CD4-positive, alpha-beta T cell (primary cell): ENCODE measurements at regions of chr18 and their contacts with region 1.

Region 1: GRCh38 chr18:46148810-46149209 is 44.6 kb downstream of the HAUS1 start:
- DNase-seq: peak in 12 of 14 experiments; percentile 9 to 74 (median 40)
- ATAC-seq: peak; percentile 64
- H3K4me3 ChIP-seq: no peak overlapping the region
- H3K4me3 Mint-ChIP-seq: no peak overlapping the region
- H3K27ac ChIP-seq: no peak overlapping the region
- H3K27ac Mint-ChIP-seq: peak overlapping the region; percentile 5
- H3K4me1 ChIP-seq: peaks cover 42% of the 10 kb centered on the region
- H3K4me1 Mint-ChIP-seq: peaks cover 29% of the 10 kb centered on the region
- H3K27me3 ChIP-seq: no peaks in the 10 kb centered on the region
- H3K27me3 Mint-ChIP-seq: no peaks in the 10 kb centered on the region
- CTCF ChIP-seq: peak; percentile 77

Region 2: GRCh38 chr18:45566025-45566740 is 582.6 kb before region 1 on chr18:
- CTCF ChIA-PET with region 1: no interaction called
- POLR2A ChIA-PET with region 1: no interaction called
- intact Hi-C with region 1: no loop called
- DNase-seq: no peak
- ATAC-seq: no peak
- H3K4me3 ChIP-seq: no peak overlapping the region
- H3K4me3 Mint-ChIP-seq: no peak overlapping the region
- H3K27ac ChIP-seq: no peak overlapping the region
- H3K27ac Mint-ChIP-seq: no peak overlapping the region
- H3K4me1 ChIP-seq: no peaks in the 10 kb centered on the region
- H3K4me1 Mint-ChIP-seq: no peaks in the 10 kb centered on the region
- H3K27me3 ChIP-seq: peaks cover 0 to 3% of the 10 kb centered on the region in 2 experiments
- H3K27me3 Mint-ChIP-seq: peaks cover 5% of the 10 kb centered on the region
- CTCF ChIP-seq: no peak

Region 3: GRCh38 chr18:45993389-45993788 is 155.4 kb before region 1 on chr18:
- CTCF ChIA-PET with region 1: no interaction called
- POLR2A ChIA-PET with region 1: no interaction called
- intact Hi-C with region 1: no loop called
- DNase-seq: no peak
- ATAC-seq: no peak
- H3K4me3 ChIP-seq: no peak overlapping the region
- H3K4me3 Mint-ChIP-seq: no peak overlapping the region
- H3K27ac ChIP-seq: no peak overlapping the region
- H3K27ac Mint-ChIP-seq: no peak overlapping the region
- H3K4me1 ChIP-seq: peaks cover 20% of the 10 kb centered on the region
- H3K4me1 Mint-ChIP-seq: peaks cover 20% of the 10 kb centered on the region
- H3K27me3 ChIP-seq: no peaks in the 10 kb centered on the region
- H3K27me3 Mint-ChIP-seq: no peaks in the 10 kb centered on the region
- CTCF ChIP-seq: no peak

Region 4: GRCh38 chr18:46213295-46213694 is 64.5 kb after region 1 on chr18:
- CTCF ChIA-PET with region 1: no interaction called
- POLR2A ChIA-PET with region 1: no interaction called
- intact Hi-C with region 1: loop called (anchors 1 to 2 kb)
- DNase-seq: peak in 3 of 14 experiments; percentile 57 to 58 (median 57)
- ATAC-seq: peak; percentile 62
- H3K4me3 ChIP-seq: no peak overlapping the region
- H3K4me3 Mint-ChIP-seq: peak overlapping the region; percentile 5
- H3K27ac ChIP-seq: no peak overlapping the region
- H3K27ac Mint-ChIP-seq: peak overlapping the region; percentile 34
- H3K4me1 ChIP-seq: peaks cover 25% of the 10 kb centered on the region
- H3K4me1 Mint-ChIP-seq: peaks cover 88% of the 10 kb centered on the region
- H3K27me3 ChIP-seq: no peaks in the 10 kb centered on the region
- H3K27me3 Mint-ChIP-seq: no peaks in the 10 kb centered on the region
- CTCF ChIP-seq: peak; percentile 75

Region 5: GRCh38 chr18:46310258-46310657 is 161.4 kb after region 1 on chr18:
- CTCF ChIA-PET with region 1: no interaction called
- POLR2A ChIA-PET with region 1: no interaction called
- intact Hi-C with region 1: no loop called
- DNase-seq: no peak
- ATAC-seq: no peak
- H3K4me3 ChIP-seq: no peak overlapping the region
- H3K4me3 Mint-ChIP-seq: no peak overlapping the region
- H3K27ac ChIP-seq: no peak overlapping the region
- H3K27ac Mint-ChIP-seq: no peak overlapping the region
- H3K4me1 ChIP-seq: no peaks in the 10 kb centered on the region
- H3K4me1 Mint-ChIP-seq: no peaks in the 10 kb centered on the region
- H3K27me3 ChIP-seq: peaks cover 0 to 4% of the 10 kb centered on the region in 2 experiments
- H3K27me3 Mint-ChIP-seq: no peaks in the 10 kb centered on the region
- CTCF ChIP-seq: no peak

Region 6: GRCh38 chr18:46481048-46481846 is 332.4 kb after region 1 on chr18:
- CTCF ChIA-PET with region 1: no interaction called
- POLR2A ChIA-PET with region 1: no interaction called
- intact Hi-C with region 1: loop called (anchors 1 to 2 kb)
- DNase-seq: peak; percentile 24 to 68 (median 48)
- ATAC-seq: peak; percentile 61
- H3K4me3 ChIP-seq: no peak overlapping the region
- H3K4me3 Mint-ChIP-seq: no peak overlapping the region
- H3K27ac ChIP-seq: no peak overlapping the region
- H3K27ac Mint-ChIP-seq: no peak overlapping the region
- H3K4me1 ChIP-seq: no peaks in the 10 kb centered on the region
- H3K4me1 Mint-ChIP-seq: no peaks in the 10 kb centered on the region
- H3K27me3 ChIP-seq: peaks cover 0 to 5% of the 10 kb centered on the region in 2 experiments
- H3K27me3 Mint-ChIP-seq: peaks cover 22% of the 10 kb centered on the region
- CTCF ChIP-seq: peak; percentile 65

Region 7: DNA sequence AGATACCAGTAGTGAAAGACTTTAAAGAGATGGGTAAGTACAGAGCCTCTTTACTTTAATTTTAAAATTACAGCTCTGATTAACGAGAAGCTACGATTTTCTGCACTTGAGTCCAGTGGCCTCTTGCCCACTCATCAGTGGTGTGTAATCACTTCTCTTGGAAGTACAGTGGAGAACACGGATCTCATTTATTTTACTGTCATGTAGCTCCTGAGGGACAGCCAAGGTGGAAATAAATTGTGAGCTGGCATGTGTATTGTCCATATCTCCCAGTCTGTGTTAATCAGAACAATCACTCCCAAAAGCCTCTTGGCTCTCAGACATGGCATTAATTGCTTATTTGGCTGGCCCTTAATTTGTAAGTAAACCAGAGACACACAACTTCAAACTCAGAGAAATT is 438.8 kb after region 1 on chr18:
- CTCF ChIA-PET with region 1: no interaction called
- POLR2A ChIA-PET with region 1: no interaction called
- intact Hi-C with region 1: no loop called
- DNase-seq: no peak
- ATAC-seq: no peak
- H3K4me3 ChIP-seq: no peak overlapping the region
- H3K4me3 Mint-ChIP-seq: no peak overlapping the region
- H3K27ac ChIP-seq: no peak overlapping the region
- H3K27ac Mint-ChIP-seq: no peak overlapping the region
- H3K4me1 ChIP-seq: no peaks in the 10 kb centered on the region
- H3K4me1 Mint-ChIP-seq: no peaks in the 10 kb centered on the region
- H3K27me3 ChIP-seq: no peaks in the 10 kb centered on the region
- H3K27me3 Mint-ChIP-seq: peaks cover 9% of the 10 kb centered on the region
- CTCF ChIP-seq: no peak

Region 8: GRCh38 chr18:46660955-46661749 is 512.3 kb after region 1 on chr18:
- CTCF ChIA-PET with region 1: interaction called, 39 read pairs
- POLR2A ChIA-PET with region 1: interaction called, 5 read pairs
- intact Hi-C with region 1: loop called (anchors 1 kb)
- DNase-seq: no peak
- ATAC-seq: no peak
- H3K4me3 ChIP-seq: no peak overlapping the region
- H3K4me3 Mint-ChIP-seq: no peak overlapping the region
- H3K27ac ChIP-seq: no peak overlapping the region
- H3K27ac Mint-ChIP-seq: no peak overlapping the region
- H3K4me1 ChIP-seq: peaks cover 3% of the 10 kb centered on the region
- H3K4me1 Mint-ChIP-seq: no peaks in the 10 kb centered on the region
- H3K27me3 ChIP-seq: no peaks in the 10 kb centered on the region
- H3K27me3 Mint-ChIP-seq: no peaks in the 10 kb centered on the region
- CTCF ChIP-seq: no peak